BJ (cell line): ENCODE measurements at regions of chrX and their contacts with region 1.

Region 1: GRCh38 chrX:123833387-123833786 is 26.5 kb upstream of the XIAP start:
- DNase-seq: no peak
- H3K4me3 ChIP-seq: no peak overlapping the region
- H3K27me3 ChIP-seq: no peaks in the 10 kb centered on the region; the same call in 1 of the 2 replicates
- CTCF ChIP-seq: peak; percentile 65

Region 2: GRCh38 chrX:123603491-123603890 is 229.9 kb before region 1 on chrX:
- CTCF ChIA-PET with region 1: no interaction called
- POLR2A ChIA-PET with region 1: no interaction called
- DNase-seq: no peak
- H3K4me3 ChIP-seq: no peak overlapping the region
- H3K27me3 ChIP-seq: no peaks in the 10 kb centered on the region
- CTCF ChIP-seq: no peak

Region 3: GRCh38 chrX:123884809-123885408 is 51.5 kb after region 1 on chrX:
- CTCF ChIA-PET with region 1: interaction called, 15 read pairs
- POLR2A ChIA-PET with region 1: no interaction called
- DNase-seq: no peak
- H3K4me3 ChIP-seq: no peak overlapping the region
- H3K27me3 ChIP-seq: no peaks in the 10 kb centered on the region
- CTCF ChIP-seq: peak; percentile 52